Tibial artery (tissue), 4 donors: ENCODE measurements at regions of chr3 and their contacts with region 1.

Region 1: GRCh38 chr3:168006584-168006983 is 89.1 kb downstream of the GOLIM4 start:
- DNase-seq: no peak
- H3K4me3 ChIP-seq: no peak overlapping the region
- H3K27ac ChIP-seq: no peak overlapping the region
- H3K4me1 ChIP-seq: no peaks in the 10 kb centered on the region
- H3K27me3 ChIP-seq: no peaks in the 10 kb centered on the region
- CTCF ChIP-seq: no peak

Region 2: DNA sequence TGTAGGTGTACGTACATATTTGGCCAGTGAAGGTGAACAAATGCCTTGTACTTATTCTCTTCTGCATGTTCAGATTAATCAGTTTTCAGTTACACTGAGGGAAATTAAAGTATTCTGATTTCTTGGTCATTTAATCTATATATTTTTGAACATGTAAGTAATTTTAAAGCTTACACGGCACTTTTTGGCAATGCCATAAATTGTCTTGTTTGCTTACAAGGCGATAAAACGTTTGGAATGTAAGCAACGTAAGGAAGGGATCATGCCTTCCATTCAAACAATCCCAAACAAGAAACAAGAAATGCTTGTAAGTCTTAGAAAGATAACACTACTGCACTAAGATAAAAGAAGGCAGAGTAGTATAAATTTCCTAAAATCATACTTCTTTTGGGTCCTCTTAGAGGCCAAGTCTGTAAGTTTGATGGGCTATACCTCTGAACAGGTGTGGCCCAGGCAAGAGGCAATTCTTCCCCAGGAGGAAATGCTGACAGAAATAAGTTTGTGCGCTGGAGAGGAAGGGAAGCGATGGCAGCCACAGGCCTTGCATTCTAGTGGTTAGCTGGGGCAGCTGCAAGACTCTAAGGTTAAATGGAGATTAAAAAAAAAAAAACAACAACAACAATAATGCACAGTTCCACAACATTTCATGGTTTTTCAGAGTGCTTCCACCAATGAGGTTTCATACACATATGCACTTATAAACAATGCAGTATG is 15.3 kb after region 1 on chr3:
- intact Hi-C with region 1: loop called (anchors 1 kb)
- DNase-seq: no peak
- H3K4me3 ChIP-seq: no peak overlapping the region
- H3K27ac ChIP-seq: no peak overlapping the region
- H3K4me1 ChIP-seq: no peaks in the 10 kb centered on the region
- H3K27me3 ChIP-seq: no peaks in the 10 kb centered on the region
- CTCF ChIP-seq: no peak

Region 3: GRCh38 chr3:168061332-168061996 is 54.9 kb after region 1 on chr3:
- intact Hi-C with region 1: no loop called
- DNase-seq: no peak
- H3K4me3 ChIP-seq: no peak overlapping the region
- H3K27ac ChIP-seq: no peak overlapping the region
- H3K4me1 ChIP-seq: peaks cover 0 to 5% (median 0%) of the 10 kb centered on the region in 4 donors
- H3K27me3 ChIP-seq: no peaks in the 10 kb centered on the region
- CTCF ChIP-seq: no peak